Mammary epithelial cell (primary cell): ENCODE measurements at regions of chr2 and their contacts with region 1.

Region 1: DNA sequence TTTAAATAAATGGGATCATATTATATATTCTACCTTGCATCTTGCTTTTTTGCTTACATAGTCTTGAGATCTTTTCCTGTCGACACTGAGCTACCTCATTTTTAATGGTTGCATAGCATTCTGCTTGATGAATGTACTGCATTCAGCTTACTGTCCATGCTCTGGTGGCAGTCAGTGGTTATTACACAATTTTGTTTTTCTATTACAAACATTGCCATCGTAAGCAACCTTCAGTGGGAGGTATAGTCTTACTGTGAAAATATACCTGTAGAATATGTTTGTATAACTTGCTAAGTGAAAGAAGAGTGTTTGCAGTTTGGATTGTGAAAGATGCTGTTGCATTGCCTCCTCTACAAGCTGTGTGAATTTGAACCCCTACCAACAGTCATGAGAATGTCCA is 43.4 kb downstream of the UBXN4 start:
- DNase-seq: no peak
- H3K4me3 ChIP-seq: no peak overlapping the region
- H3K27ac ChIP-seq: no peak overlapping the region
- H3K4me1 ChIP-seq: peaks cover 6% of the 10 kb centered on the region
- H3K27me3 ChIP-seq: no peaks in the 10 kb centered on the region
- CTCF ChIP-seq: peak in 1 of 2 donors; percentile 24

Region 2: GRCh38 chr2:135226961-135227360 is 558.1 kb before region 1 on chr2:
- CTCF ChIA-PET with region 1: no interaction called
- dilution Hi-C with region 1: no loop called
- in situ Hi-C with region 1: no loop called
- intact Hi-C with region 1: no loop called
- DNase-seq: no peak
- H3K4me3 ChIP-seq: no peak overlapping the region
- H3K27ac ChIP-seq: no peak overlapping the region
- H3K4me1 ChIP-seq: no peaks in the 10 kb centered on the region
- H3K27me3 ChIP-seq: no peaks in the 10 kb centered on the region
- CTCF ChIP-seq: no peak

Region 3: GRCh38 chr2:135736546-135736945 is 48.5 kb before region 1 on chr2:
- CTCF ChIA-PET with region 1: no interaction called
- dilution Hi-C with region 1: loop called (anchors 5 kb)
- in situ Hi-C with region 1: no loop called
- intact Hi-C with region 1: no loop called
- DNase-seq: no peak
- H3K4me3 ChIP-seq: no peak overlapping the region
- H3K27ac ChIP-seq: no peak overlapping the region
- H3K4me1 ChIP-seq: no peaks in the 10 kb centered on the region
- H3K27me3 ChIP-seq: no peaks in the 10 kb centered on the region
- CTCF ChIP-seq: no peak